ENCODE measurements at regions of chr16 and their contacts with region 1.

Region 1: GRCh38 chr16:83068686-83069085 is 441.9 kb downstream of the CDH13 start:
- DNase-seq: no peak
- ATAC-seq: no peak
- H3K4me3 ChIP-seq: no peak overlapping the region
- H3K27ac ChIP-seq: no peak overlapping the region
- H3K4me1 ChIP-seq: peaks cover 6% of the 10 kb centered on the region
- H3K27me3 ChIP-seq: no peaks in the 10 kb centered on the region
- CTCF ChIP-seq: peak; percentile 25

Region 2: DNA sequence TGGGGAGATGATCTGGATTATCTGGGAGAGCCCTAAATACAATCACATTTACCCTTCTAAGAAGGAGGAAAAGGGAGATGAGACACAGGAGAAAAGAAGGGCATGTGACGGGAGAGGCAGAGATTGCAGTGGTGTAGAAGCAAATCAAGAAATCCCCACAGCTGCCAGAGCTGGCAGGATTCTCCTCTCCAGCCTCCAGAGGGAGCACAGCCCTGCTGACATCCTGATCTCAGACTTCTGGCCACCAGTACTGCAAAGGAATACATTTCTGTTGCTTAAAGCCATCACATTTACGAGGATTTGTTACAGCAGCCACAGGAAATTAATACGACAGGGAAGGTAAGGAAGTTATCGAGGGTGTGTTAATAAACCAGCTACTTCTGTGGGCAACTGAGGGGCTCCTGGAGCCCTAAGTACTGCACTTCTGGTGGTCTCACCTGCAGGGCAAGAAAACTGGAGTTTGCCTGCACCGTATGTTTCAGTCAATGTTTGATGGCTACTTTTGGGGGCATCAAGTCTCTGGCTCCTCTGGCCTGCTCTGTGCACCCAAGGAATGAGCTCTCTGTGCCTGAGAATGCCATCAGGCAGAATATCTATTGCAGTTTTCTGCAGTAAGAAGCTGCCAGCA is 464.8 kb before region 1 on chr16:
- intact Hi-C with region 1: loop called in 1 of 2 experiments (anchors 10 kb)
- DNase-seq: peak; percentile 25 to 69
- ATAC-seq: peak; percentile 90 to 98 (median 92)
- H3K4me3 ChIP-seq: no peak overlapping the region
- H3K27ac ChIP-seq: no peak overlapping the region
- H3K4me1 ChIP-seq: peaks cover 8% of the 10 kb centered on the region
- H3K27me3 ChIP-seq: no peaks in the 10 kb centered on the region
- CTCF ChIP-seq: peak; percentile 71

Region 3: DNA sequence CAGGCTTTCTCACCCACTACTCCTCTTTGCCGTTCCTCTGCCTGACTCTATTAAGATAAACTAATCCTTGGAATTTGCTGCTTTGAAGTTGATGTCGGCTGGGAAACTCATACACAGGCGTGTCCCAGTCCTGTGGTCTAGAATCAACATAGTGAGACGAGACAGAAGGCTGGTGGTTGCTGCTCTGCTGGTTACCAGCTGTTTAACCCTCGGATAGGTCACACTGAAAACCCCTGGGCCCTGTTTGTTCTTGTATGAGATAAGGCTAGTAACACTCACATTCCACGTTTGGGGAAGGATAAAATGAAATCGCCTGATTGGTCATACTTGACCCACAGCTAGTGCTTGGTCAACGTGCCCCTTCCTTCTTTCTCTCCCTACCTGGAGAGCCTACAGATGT is 75.1 kb after region 1 on chr16:
- intact Hi-C with region 1: no loop called
- DNase-seq: no peak
- ATAC-seq: no peak
- H3K4me3 ChIP-seq: no peak overlapping the region
- H3K27ac ChIP-seq: no peak overlapping the region
- H3K4me1 ChIP-seq: no peaks in the 10 kb centered on the region
- H3K27me3 ChIP-seq: no peaks in the 10 kb centered on the region
- CTCF ChIP-seq: no peak

Region 4: GRCh38 chr16:83441517-83441916 is 372.8 kb after region 1 on chr16:
- intact Hi-C with region 1: loop called in 1 of 2 experiments (anchors 10 kb)
- DNase-seq: no peak
- ATAC-seq: peak in 1 of 4 donors; percentile 41
- H3K4me3 ChIP-seq: no peak overlapping the region
- H3K27ac ChIP-seq: no peak overlapping the region
- H3K4me1 ChIP-seq: peaks cover 4% of the 10 kb centered on the region
- H3K27me3 ChIP-seq: no peaks in the 10 kb centered on the region
- CTCF ChIP-seq: no peak

Measured in psoas muscle (tissue), 8 donors.